Panc1 (cell line): ENCODE measurements at regions of chr11 and their contacts with region 1.

Region 1: DNA sequence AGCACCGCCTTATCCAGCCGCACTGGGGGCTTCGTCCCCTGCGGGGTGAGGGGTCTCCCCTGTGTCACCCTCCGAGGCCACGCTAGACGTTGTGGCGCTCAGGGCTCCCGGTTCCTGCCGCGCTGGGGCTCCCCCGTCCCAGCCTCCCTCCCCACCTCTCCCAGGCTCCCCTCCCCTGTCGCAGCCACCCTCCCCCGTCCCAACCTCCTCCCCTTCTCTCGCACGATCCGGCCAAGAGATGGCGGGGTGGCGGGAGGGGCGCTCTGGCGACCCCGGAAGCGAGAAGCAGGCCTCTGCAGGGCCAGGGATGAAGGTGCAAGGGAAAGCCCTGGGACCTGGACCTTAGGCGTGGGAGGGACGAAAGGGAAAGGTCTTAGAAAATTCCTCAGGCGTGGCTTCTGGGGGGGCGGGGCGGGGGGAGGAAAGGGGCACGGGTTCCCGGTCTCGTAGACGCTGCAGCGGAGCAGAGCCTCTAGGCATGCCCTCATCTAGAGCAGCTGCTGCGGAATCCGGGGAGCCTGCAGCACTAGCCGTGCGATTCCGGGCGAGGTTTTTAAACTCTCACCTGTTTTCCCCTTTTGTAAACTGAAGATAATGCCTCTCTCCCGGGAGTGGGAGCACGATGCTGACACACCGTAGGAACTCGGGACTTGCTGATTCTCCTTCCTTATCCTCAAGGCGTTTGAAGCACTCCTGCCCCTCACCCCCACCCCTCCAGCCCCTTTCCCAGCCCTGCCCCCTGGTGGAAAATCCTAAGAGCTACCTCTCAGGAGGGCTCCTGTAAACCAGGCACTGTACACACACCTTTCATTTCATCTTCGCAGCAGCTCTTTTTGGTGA is 14.4 kb downstream of the KCNJ5 start:
- DNase-seq: no peak
- ATAC-seq: peak; percentile 83
- H3K4me3 ChIP-seq: peak overlapping the region; percentile 50 to 64
- H3K27ac ChIP-seq: peak overlapping the region; percentile 68
- H3K4me1 ChIP-seq: peaks cover 23% of the 10 kb centered on the region
- H3K27me3 ChIP-seq: peaks cover 2% of the 10 kb centered on the region; the same call in 1 of the 2 replicates
- CTCF ChIP-seq: peak; percentile 86

Region 2: GRCh38 chr11:128884703-128885338 is 20.7 kb before region 1 on chr11:
- CTCF ChIA-PET with region 1: interaction called, 14 read pairs
- POLR2A ChIA-PET with region 1: no interaction called
- in situ Hi-C with region 1: no loop called
- intact Hi-C with region 1: no loop called
- DNase-seq: peak; percentile 69
- ATAC-seq: peak; percentile 90
- H3K4me3 ChIP-seq: no peak overlapping the region
- H3K27ac ChIP-seq: no peak overlapping the region
- H3K4me1 ChIP-seq: no peaks in the 10 kb centered on the region
- H3K27me3 ChIP-seq: peaks cover 25% of the 10 kb centered on the region
- CTCF ChIP-seq: peak; percentile 93

Region 3: GRCh38 chr11:128894685-128895084 is 10.9 kb before region 1 on chr11:
- CTCF ChIA-PET with region 1: interaction called, 10 read pairs
- POLR2A ChIA-PET with region 1: no interaction called
- in situ Hi-C with region 1: no loop called
- intact Hi-C with region 1: no loop called
- DNase-seq: no peak
- ATAC-seq: no peak
- H3K4me3 ChIP-seq: no peak overlapping the region
- H3K27ac ChIP-seq: no peak overlapping the region
- H3K4me1 ChIP-seq: no peaks in the 10 kb centered on the region
- H3K27me3 ChIP-seq: peaks cover 6% of the 10 kb centered on the region
- CTCF ChIP-seq: no peak

Region 4: DNA sequence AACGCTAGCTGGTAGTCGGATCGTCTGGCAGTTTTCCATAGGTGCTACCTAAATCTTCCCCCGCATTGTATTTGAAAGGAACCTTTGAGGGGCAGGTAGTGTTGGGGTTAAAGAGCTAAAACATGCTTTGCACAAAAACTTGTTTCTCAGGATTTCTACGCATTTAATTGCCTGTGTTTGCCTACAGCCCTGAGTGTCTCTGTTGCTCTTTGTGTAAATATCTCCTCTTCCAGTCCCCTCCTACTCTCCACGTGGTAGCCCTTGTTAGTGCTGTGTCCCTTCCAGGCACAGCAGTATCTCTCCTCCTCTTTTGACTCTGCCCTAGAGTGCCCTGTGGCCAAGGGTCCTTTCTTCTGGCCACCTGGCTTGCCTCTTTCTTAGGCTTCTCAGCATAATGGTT is 551.8 kb after region 1 on chr11:
- CTCF ChIA-PET with region 1: no interaction called
- POLR2A ChIA-PET with region 1: no interaction called
- in situ Hi-C with region 1: no loop called
- intact Hi-C with region 1: no loop called
- DNase-seq: no peak
- ATAC-seq: no peak
- H3K4me3 ChIP-seq: no peak overlapping the region
- H3K27ac ChIP-seq: no peak overlapping the region
- H3K4me1 ChIP-seq: no peaks in the 10 kb centered on the region
- H3K27me3 ChIP-seq: no peaks in the 10 kb centered on the region
- CTCF ChIP-seq: no peak